Activated CD4-positive, alpha-beta T cell treated with anti-CD3 and anti-CD28 coated beads for 36 hours (primary cell): ENCODE measurements at regions of chr12 and their contacts with region 1.

Region 1: DNA sequence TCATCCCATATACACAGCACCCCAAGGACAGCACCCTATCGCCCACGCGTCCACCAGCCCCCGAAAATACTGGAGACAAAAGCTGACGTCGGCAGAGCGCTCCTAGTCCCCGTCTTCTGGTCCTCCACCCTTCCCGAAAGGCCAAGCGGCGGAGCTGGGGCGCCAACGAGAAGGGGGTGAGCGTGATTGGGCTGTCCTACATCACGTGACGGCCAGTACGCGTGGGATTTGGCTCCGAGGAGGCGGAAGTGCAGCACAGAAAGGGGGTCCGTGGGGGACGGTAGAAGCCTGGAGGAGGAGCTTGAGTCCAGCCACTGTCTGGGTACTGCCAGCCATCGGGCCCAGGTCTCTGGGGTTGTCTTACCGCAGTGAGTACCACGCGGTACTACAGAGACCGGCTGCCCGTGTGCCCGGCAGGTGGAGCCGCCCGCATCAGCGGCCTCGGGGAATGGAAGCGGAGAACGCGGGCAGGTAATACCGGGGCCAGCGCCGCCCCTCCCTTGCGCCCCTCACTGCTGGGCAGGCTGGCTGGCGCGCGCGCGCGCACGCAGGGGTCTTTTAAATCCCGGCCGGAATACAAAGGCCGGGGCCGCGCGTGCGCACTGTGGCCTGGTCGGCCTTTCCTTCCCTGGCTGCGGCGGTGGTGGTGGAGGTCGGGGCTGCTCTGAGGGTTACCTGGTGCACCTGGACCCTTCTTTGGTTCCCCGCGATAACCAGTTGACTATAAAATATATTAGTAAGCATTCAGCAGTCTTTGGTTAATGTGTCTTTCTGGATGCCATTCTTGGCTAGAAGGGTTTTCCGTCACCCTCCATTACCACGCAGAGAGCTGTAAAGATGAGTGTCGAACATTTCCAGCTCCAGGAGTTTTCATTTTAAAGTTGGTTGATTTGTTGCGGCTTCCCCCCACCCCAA is at the start of gene TDG:
- DNase-seq: peak; percentile 99
- ATAC-seq: peak; percentile 94
- H3K4me3 Mint-ChIP-seq: peak within 1 kb of the TSS; percentile 94
- H3K27ac Mint-ChIP-seq: peak within 1 kb of the TSS; percentile 98
- H3K4me1 Mint-ChIP-seq: peaks cover 48% of the 10 kb centered on the region
- H3K27me3 Mint-ChIP-seq: no peaks in the 10 kb centered on the region
- total RNA-seq, gene TDG: 35.4 to 37.2 TPM

Region 2: GRCh38 chr12:103877934-103878510 is 87.8 kb before region 1 on chr12:
- CTCF ChIA-PET with region 1: no interaction called
- POLR2A ChIA-PET with region 1: no interaction called
- intact Hi-C with region 1: loop called (anchors 2 to 5 kb)
- DNase-seq: peak; percentile 75
- ATAC-seq: peak; percentile 85
- H3K4me3 Mint-ChIP-seq: no peak overlapping the region
- H3K27ac Mint-ChIP-seq: no peak overlapping the region
- H3K4me1 Mint-ChIP-seq: peaks cover 21% of the 10 kb centered on the region
- H3K27me3 Mint-ChIP-seq: no peaks in the 10 kb centered on the region

Region 3: DNA sequence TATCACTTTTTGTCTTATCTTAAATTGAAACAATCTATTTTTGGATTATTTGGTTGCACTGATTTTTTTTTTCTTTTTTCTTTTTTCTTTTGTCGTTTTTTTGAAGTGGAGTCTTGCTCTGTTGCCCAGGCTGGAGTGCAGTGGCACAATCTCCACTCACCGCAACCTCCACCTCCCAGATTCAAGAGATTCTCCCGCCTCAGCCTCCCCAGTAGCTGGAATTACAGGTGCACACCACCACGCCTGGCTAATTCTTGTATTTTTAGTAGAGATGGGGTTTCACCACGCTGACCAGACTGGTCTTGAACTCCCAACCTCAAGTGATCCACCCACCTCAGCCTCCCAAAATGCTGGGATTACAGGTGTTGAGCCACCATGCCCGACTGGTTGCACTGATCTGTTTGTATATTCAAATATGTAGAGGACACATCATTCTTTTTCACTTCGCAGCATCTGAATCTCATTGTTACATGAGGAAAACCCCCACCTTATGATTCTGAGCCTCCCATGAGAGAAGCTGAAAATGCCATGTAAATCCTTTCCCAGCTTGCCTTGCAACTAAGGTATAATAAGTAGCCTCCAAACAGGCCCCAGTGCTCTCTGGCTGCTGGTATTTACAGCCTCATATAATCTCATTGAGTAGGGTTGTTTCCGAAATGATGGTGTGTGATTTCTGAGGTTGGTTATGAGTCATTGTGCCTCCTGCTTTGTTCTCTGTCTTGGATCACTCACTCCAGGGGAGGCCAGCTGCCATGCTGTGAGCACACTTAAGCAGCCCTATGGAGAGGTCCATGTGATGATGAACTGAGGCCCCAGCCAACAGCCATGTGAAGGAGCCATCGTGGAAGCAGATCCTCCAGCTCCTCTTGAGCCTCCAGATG is 40.8 kb before region 1 on chr12:
- CTCF ChIA-PET with region 1: interaction called, 13 read pairs
- POLR2A ChIA-PET with region 1: interaction called, 50 read pairs
- intact Hi-C with region 1: loop called (anchors 1 kb)
- DNase-seq: peak; percentile 80
- ATAC-seq: peak; percentile 53
- H3K4me3 Mint-ChIP-seq: peak overlapping the region; percentile 63
- H3K27ac Mint-ChIP-seq: peak overlapping the region; percentile 87
- H3K4me1 Mint-ChIP-seq: peaks cover 36% of the 10 kb centered on the region
- H3K27me3 Mint-ChIP-seq: no peaks in the 10 kb centered on the region

Region 4: DNA sequence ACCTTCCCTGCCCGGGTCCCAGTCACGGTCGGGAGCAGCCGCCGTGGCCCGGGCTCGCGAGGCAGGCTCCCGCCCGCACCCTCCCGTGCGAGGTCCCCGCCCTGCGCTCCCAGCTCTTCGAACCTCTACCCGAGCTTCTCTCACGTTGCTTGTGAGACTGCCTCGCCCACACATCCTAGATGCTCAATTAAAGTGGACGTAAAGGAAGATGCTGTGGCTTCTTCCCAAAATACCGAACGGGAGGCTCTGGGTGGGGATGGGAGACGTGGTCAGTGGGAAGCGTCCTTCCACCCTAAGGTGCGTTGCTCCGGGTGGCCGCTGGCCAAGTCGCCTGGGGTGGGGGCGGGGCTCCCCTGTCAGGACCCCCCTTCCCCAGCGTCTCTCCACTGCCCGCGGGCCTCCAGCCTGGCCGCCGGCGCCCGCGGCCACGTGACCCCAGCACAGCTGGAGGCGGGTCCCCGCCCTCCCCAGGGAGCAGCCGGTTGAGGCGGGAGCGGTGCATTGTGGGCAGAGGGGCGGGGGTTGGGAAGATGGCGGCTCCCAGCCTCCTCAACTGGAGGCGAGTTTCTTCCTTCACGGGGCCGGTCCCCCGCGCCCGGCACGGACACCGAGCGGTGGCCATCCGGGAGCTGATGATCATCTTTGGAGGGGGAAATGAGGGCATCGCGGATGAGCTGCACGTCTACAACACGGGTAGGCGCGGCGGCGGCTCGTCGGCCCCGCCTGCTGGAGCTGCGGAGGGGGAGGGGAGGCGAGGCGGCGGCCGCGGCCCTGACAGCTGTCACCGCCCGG is 98.4 kb after region 1 on chr12 and contains the start of gene HCFC2:
- CTCF ChIA-PET with region 1: interaction called, 3 read pairs
- POLR2A ChIA-PET with region 1: interaction called, 6 read pairs
- intact Hi-C with region 1: loop called (anchors 1 kb)
- DNase-seq: peak; percentile 95
- ATAC-seq: peak; percentile 95
- H3K4me3 Mint-ChIP-seq: peak within 1 kb of the TSS; percentile 85
- H3K27ac Mint-ChIP-seq: peak within 1 kb of the TSS; percentile 89
- H3K4me1 Mint-ChIP-seq: peaks cover 20% of the 10 kb centered on the region
- H3K27me3 Mint-ChIP-seq: peaks cover 7% of the 10 kb centered on the region
- total RNA-seq, gene HCFC2: 6.4 to 6.5 TPM

Region 5: DNA sequence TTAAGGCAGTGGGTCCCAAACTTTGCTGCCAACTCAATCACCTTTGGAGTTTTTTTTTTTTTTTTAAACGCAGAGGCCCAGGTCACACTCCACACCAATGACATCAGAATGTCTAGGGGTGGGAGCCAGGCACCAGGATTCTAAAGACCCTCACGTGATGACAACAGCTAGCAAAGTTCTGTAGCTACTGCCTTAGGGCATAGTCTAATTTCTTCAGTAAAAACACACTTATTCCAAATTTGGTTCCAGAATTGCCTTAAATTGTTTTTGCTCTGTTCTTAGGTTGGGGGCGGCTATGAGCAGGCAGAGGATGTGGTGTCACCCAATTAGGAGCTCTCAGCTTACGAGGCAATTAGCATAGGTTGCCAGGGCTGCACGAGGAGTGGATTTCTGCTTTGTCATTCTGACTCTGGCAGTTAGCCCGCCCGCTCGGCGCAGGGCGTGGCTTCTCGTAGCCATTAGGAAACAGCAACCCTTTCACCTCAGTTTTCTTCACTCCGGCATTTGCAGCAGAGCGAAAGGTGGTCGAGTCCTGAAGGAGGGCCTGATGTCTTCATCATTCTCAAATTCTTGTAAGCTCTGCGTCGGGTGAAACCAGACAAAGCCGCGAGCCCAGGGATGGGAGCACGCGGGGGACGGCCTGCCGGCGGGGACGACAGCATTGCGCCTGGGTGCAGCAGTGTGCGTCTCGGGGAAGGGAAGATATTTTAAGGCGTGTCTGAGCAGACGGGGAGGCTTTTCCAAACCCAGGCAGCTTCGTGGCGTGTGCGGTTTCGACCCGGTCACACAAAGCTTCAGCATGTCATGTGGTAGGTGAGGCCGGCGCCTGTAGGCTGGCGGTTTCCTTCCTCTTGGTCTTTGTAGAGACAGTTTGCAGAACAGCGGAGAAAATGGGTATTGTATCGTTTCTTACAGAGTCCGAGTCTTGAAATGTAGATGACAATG is 321.0 kb after region 1 on chr12:
- CTCF ChIA-PET with region 1: no interaction called
- POLR2A ChIA-PET with region 1: interaction called, 3 read pairs
- intact Hi-C with region 1: loop called in 1 of 2 experiments (anchors 2 kb)
- DNase-seq: peak; percentile 95
- ATAC-seq: peak; percentile 84
- H3K4me3 Mint-ChIP-seq: peak overlapping the region; percentile 95
- H3K27ac Mint-ChIP-seq: peak overlapping the region; percentile 97
- H3K4me1 Mint-ChIP-seq: peaks cover 12% of the 10 kb centered on the region
- H3K27me3 Mint-ChIP-seq: no peaks in the 10 kb centered on the region

Region 6: GRCh38 chr12:105235732-105236476 is 1270.1 kb after region 1 on chr12 and contains the start of gene APPL2:
- CTCF ChIA-PET with region 1: no interaction called
- POLR2A ChIA-PET with region 1: no interaction called
- intact Hi-C with region 1: loop called in 1 of 2 experiments (anchors 5 kb)
- DNase-seq: peak; percentile 87
- ATAC-seq: peak; percentile 84
- H3K4me3 Mint-ChIP-seq: peak within 1 kb of the TSS; percentile 85
- H3K27ac Mint-ChIP-seq: peak within 1 kb of the TSS; percentile 86
- H3K4me1 Mint-ChIP-seq: peaks cover 41% of the 10 kb centered on the region
- H3K27me3 Mint-ChIP-seq: no peaks in the 10 kb centered on the region
- total RNA-seq, gene APPL2: 13.9 to 17.2 TPM